AG04449 (cell line): ENCODE measurements at regions of chr3 and their contacts with region 1.

Region 1: GRCh38 chr3:112746675-112747280 is 99.9 kb downstream of the CD200R1L start:
- DNase-seq: no peak
- H3K4me3 ChIP-seq: no peak overlapping the region
- CTCF ChIP-seq: no peak

Region 2: DNA sequence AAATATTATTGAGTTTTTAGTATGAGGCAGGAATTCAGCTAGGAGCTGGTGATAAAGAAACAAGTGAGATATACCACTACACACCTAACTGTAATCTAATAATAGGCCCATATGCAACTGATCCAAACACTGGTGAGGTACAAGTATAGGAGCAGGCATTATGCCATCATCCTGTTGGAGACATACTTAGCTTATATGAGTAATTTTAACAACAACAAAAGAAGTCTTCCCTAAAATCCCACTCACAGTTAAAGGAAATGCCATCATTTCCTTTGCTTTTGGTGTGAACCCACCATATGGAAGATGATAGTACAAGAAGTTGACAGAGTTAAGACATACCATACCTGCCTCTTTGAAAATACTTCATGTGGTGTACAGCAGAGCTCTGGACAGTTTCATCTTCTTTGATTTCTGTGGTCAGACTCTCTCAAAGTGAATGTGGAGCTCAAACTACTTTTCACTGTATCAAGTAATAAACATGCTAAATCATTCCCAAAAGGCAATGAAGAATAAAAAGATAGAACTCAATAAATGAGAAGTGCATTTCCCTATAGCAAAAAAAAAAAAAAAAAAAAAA is 14.4 kb after region 1 on chr3:
- CTCF ChIA-PET with region 1: interaction called, 18 read pairs
- POLR2A ChIA-PET with region 1: interaction called, 3 read pairs
- DNase-seq: no peak
- H3K4me3 ChIP-seq: no peak overlapping the region
- CTCF ChIP-seq: no peak